Cardiac septum (tissue), 1 donor: ENCODE measurements at regions of chr2 and their contacts with region 1.

Region 1: DNA sequence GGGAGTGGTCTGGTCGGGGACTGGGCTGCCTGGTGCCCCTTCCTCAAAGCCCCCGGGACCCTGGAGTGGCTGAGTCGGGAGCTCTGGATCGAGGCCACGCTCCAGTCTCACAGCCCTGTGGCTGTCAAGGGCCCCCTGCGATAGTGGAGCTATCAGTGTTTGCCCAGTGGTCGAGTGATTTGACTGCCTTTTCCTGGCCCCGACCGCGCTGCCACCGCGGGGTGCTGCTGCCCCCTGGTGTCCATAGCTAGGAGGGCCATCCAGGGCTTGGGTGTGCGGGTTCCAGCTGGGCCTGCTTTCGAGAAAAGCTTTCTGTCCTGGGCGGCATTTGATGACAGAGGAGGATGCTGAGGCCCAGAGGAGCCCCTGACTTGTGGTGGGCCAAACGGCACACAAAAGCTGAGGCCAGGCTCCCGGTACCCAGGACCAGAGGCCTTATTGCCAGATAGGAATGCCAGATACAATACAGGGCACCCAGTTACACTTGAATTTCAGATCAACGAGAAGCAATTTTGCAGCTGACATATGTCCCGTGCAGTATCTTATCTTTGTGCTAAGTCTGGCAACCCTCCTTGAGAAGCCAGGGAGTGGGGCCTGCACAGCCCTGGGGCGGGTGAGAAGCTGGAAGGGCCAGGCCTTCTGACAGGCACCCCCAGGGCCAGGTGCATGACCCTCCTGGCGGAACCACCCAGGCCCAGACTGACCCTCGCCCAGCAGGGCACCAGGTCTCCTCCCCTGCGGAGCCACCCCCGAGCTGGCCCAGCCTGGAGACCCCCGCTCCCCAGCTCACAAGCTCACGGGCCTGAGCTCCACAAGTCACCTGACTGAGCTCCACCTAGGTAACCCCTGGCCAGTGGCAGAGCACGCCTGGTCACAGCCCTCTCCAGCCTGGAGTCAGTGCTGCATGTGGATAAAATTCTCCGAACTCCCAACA is 13.0 kb downstream of the ODC1 start:
- DNase-seq: peak; percentile 87

Region 2: DNA sequence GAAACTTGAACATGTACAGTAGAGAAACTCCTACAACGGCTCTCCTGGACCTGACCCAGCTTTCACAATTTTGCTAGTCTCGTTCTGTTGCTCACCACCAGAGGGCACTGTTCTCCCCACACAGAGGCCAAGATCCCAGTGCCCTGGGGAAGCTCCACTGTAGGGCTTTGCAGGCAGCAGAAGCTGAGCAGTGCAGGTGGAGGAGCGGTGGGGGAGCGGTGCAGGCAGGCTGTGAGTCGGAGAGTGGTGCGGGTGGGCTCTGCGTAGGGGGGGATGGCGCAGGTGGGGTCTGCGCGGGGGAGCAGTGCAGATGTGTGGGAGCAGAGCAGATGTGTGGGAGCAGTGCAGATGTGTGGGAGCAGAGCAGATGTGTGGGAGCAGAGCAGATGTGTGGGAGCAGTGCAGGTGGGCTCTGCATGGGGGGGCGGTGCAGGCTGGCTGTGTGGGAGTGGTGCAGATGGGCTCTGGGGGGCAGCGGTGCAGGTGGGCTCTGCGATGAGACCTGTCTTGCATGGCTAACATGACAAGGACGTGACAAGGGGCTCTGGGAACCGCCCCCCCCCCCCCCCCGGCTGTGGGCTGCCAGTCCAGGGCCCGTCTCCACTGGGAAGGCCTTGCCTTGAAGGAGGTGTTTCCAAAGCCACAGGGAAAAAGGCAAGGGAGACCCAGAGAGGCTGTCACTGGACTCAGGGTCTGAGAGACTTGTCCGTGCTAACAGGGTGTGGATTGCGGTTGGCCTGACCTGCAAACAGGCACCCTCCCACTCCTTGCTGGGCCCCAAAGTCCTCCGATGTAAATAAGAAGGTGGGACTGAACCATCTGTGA is 362.3 kb before region 1 on chr2:
- intact Hi-C with region 1: loop called (anchors 2 kb)
- DNase-seq: peak; percentile 90

Region 3: GRCh38 chr2:10124538-10125045 is 310.6 kb before region 1 on chr2:
- intact Hi-C with region 1: loop called (anchors 1 kb)
- DNase-seq: no peak

Region 4: GRCh38 chr2:10141736-10142642 is 293.2 kb before region 1 on chr2:
- intact Hi-C with region 1: loop called (anchors 1 kb)
- DNase-seq: no peak

Region 5: GRCh38 chr2:10369269-10370255 is 65.6 kb before region 1 on chr2:
- intact Hi-C with region 1: no loop called
- DNase-seq: no peak

Region 6: GRCh38 chr2:10659898-10660568 is 224.9 kb after region 1 on chr2:
- intact Hi-C with region 1: loop called (anchors 5 kb)
- DNase-seq: no peak